ENCODE measurements at regions of chr13 and their contacts with region 1.

Region 1: DNA sequence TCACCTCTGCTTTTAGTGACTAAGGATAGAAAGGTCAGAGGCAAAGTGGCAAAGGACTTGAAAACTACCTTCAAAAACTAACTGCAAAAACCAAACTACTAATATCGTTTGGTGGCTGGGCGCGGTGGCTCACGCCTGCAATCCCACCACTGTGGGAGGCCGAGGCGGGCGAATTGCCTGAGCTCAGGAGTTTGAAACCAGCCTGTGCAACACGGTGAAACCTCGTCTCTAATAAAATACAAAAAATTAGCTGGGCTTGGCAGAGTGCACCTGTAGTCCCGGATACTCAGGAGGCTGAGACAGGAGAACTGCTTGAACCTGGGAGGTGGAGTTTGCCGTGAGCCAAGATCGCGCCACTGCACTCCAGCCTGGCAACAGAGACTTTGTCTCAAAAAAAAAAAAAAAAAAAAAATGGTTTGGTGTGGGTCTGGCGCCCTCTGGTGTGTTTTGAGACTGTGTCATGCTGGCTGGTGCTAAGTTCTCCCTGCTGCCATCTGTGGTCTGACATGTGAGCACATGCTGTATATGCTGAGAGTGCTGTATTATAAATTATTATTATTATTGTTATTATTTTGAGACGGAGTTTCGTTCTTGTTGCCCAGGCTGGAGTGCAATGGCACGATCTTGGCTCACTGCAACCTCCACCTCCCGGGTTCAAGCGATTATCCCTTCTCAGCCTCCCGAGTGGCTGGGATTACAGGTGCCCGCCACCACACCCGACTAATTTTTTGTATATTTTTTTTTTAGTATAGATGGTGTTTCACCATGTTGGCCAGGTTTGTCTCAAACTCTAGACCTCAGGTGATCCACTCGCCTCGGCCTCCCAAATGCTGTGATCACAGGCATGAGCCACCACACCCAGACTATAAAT is 36.0 kb upstream of the RNF17 start:
- DNase-seq: peak; percentile 43
- ATAC-seq: peak; percentile 93
- H3K4me3 ChIP-seq: no peak overlapping the region
- H3K27ac ChIP-seq: no peak overlapping the region
- H3K4me1 ChIP-seq: peaks cover 9% of the 10 kb centered on the region; the same call in 1 of the 2 replicates
- H3K27me3 ChIP-seq: peaks cover 0 to 3% of the 10 kb centered on the region in 2 experiments; a peak in 1 of 4 replicates
- CTCF ChIP-seq: peak; percentile 76 to 83 (median 83)
- EP300 ChIP-seq: no peak
- POLR2A ChIP-seq: no peak
- RAD21 ChIP-seq: peak; percentile 94

Region 2: DNA sequence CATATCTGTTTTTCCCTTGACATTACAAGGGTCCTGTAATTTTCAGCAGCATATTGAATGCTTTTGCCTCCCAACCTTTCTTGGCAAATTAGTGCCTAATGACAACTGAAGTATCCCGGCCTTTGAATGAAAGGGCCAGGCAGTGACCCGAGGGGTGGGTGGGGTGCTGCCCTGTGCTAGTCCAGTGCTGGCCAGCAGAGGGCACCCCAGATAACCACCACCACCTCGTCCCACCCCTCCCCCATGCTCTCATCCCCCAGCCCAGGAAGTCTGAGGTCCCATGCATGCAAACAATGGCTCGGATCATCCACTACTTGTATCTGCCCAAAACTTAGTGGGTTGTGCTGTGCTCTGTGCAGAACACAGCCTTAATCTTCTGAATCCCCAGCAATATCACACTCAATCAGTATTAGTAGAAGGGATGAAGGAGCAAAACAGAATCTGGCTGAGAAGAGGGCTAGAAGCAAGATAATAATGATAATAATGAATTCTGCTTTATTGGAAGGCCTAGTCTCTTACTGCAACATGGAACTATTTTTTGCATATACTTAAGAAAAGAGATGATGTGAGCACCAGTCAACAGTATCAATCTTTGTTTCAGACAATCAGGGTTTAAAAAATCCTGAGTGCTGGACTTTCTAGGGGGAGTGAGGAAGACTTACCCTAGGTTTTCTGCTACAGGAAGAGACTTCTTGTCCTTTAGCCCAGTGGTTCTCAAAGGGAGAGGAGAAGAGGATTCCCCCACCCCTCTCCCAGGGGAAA is 43.9 kb before region 1 on chr13:
- CTCF ChIA-PET with region 1: interaction called, 13 read pairs
- POLR2A ChIA-PET with region 1: no interaction called
- RAD21 ChIA-PET with region 1: interaction called, 4 read pairs
- SMC1A ChIA-PET with region 1: interaction called, 4 read pairs
- in situ Hi-C with region 1: no loop called
- intact Hi-C with region 1: loop called (anchors 2 kb)
- DNase-seq: no peak
- ATAC-seq: peak; percentile 89
- H3K4me3 ChIP-seq: no peak overlapping the region
- H3K27ac ChIP-seq: no peak overlapping the region
- H3K4me1 ChIP-seq: peaks cover 23% of the 10 kb centered on the region
- H3K27me3 ChIP-seq: peaks cover 3 to 4% of the 10 kb centered on the region in 2 experiments
- CTCF ChIP-seq: peak; percentile 68 to 89 (median 82)
- EP300 ChIP-seq: no peak
- POLR2A ChIP-seq: no peak
- RAD21 ChIP-seq: peak; percentile 44

Region 3: DNA sequence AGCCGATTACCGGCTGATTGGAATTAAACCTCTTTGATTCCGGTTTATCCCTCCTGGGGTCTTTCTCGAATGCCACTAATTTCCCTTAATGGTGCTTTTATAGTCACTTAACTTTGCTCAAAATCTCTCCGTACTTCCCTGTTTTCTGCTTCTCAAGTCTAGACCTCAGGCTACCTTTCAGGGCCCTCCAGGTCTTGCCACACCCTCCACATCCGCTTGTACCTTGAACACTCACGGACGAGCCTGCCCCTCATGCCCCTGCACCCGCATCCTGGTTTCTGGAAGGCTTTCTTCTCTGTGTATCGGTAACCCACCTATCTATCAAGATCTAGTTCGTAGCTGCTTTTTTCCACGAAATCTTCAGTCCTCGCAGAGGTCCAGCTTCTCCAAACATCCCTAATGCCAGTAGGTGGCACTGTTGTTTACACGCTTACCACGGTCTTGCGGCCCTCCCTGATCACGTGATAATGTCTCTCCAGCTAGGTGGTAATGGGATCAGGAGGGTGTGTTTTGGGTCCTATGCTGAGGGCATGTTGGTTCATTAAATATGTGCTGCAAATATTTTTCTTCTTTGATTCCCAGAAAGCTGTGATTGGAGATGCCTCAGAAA is 34.0 kb before region 1 on chr13:
- CTCF ChIA-PET with region 1: interaction called, 43 read pairs
- POLR2A ChIA-PET with region 1: no interaction called
- RAD21 ChIA-PET with region 1: interaction called, 7 read pairs
- SMC1A ChIA-PET with region 1: interaction called, 12 read pairs
- in situ Hi-C with region 1: no loop called
- intact Hi-C with region 1: loop called (anchors 1 kb)
- DNase-seq: no peak
- ATAC-seq: peak; percentile 96
- H3K4me3 ChIP-seq: no peak overlapping the region
- H3K27ac ChIP-seq: no peak overlapping the region
- H3K4me1 ChIP-seq: no peaks in the 10 kb centered on the region; the same call in 1 of the 2 replicates
- H3K27me3 ChIP-seq: peaks cover 2 to 6% of the 10 kb centered on the region in 2 experiments; a peak in 1 of 4 replicates
- CTCF ChIP-seq: peak; percentile 72 to 81 (median 80)
- EP300 ChIP-seq: no peak
- POLR2A ChIP-seq: no peak
- RAD21 ChIP-seq: peak; percentile 80

Region 4: DNA sequence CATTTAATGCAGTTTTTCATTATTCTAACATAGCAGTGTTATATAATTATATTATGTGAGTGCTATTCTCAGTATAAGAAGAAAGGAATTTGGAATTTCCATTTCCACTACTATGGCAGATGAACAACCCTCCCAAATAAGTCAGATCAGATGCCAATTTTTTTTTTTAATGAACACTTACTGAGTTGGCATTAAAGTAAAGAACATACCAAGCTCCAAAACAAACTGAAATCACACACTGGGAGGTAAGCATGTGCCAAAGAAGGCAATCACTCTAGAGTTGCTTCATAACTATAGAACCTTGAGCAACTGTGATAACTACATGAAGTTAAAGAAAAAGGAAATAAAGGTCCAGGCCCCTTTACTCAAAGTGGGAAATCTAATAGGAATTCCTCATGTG is 126.3 kb after region 1 on chr13:
- CTCF ChIA-PET with region 1: no interaction called
- POLR2A ChIA-PET with region 1: no interaction called
- RAD21 ChIA-PET with region 1: no interaction called
- SMC1A ChIA-PET with region 1: no interaction called
- in situ Hi-C with region 1: no loop called
- intact Hi-C with region 1: no loop called
- DNase-seq: no peak
- ATAC-seq: no peak
- H3K4me3 ChIP-seq: no peak overlapping the region
- H3K27ac ChIP-seq: no peak overlapping the region
- H3K4me1 ChIP-seq: peaks cover 7% of the 10 kb centered on the region; the same call in 1 of the 2 replicates
- H3K27me3 ChIP-seq: no peaks in the 10 kb centered on the region
- CTCF ChIP-seq: no peak
- EP300 ChIP-seq: no peak
- POLR2A ChIP-seq: no peak
- RAD21 ChIP-seq: no peak